ENCODE measurements at regions of chr17 and their contacts with region 1.

Region 1: DNA sequence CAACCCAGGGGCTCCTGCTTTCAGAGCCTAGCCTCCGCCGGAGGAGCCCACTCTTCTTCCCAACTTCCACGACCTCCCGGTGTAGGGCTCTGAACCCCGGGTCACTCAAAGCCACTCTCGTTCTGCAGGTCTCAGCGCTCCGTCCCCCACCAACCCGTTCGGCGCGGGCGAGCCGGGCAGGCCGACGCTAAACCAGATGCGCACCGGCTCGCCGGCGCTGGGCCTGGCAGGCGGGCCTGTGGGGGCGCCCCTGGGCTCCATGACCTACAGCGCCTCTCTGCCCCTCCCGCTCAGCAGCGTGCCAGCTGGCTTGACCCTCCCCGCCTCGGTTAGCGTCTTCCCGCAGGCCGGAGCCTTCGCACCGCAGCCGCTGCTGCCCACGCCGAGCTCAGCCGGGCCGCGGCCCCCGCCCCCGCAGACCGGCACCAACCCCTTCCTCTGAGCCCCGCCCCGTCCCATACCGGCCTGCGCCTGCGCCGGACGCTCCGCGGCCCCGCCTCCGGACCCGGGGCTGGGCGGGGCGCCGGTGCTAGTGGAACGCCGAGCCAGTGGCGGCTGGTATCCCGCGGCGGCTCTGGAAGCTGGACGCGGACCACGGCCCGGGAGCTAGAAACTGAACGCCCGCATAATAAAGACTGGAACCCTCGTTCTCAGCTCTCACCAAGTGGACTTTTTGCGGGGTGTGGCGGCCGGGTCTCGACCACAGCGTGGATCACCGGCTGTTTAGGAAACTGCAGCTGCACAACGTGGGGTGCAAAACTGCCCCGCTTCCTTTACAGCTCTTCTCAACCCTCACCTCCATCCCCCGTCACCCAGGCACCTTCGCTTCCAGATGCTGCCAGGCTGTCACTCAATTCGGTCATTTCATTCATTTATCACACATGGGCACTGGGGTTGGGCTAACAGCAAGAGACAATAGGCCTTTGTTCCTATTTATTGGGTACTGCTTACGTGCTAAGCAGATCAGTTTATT is 5.0 kb upstream of the SPATA20 start:
- DNase-seq: peak; percentile 85
- ATAC-seq: peak; percentile 91
- H3K4me3 Mint-ChIP-seq: peak overlapping the region; percentile 71
- H3K27ac Mint-ChIP-seq: peak overlapping the region; percentile 52
- H3K4me1 Mint-ChIP-seq: peaks cover 12% of the 10 kb centered on the region
- H3K27me3 Mint-ChIP-seq: peaks cover 9% of the 10 kb centered on the region

Region 2: GRCh38 chr17:50507871-50508572 is 34.0 kb before region 1 on chr17 and contains the start of gene MYCBPAP:
- CTCF ChIA-PET with region 1: interaction called, 11 read pairs
- DNase-seq: peak; percentile 91
- ATAC-seq: peak; percentile 75
- H3K4me3 Mint-ChIP-seq: peak within 1 kb of the TSS; percentile 87
- H3K27ac Mint-ChIP-seq: peak within 1 kb of the TSS; percentile 85
- H3K4me1 Mint-ChIP-seq: peaks cover 52% of the 10 kb centered on the region
- H3K27me3 Mint-ChIP-seq: peaks cover 6% of the 10 kb centered on the region
- total RNA-seq, gene MYCBPAP: 6.7 to 13.9 TPM

Region 3: GRCh38 chr17:50568659-50569058 is 26.7 kb after region 1 on chr17:
- CTCF ChIA-PET with region 1: no interaction called
- DNase-seq: no peak
- ATAC-seq: no peak
- H3K4me3 Mint-ChIP-seq: no peak overlapping the region
- H3K27ac Mint-ChIP-seq: no peak overlapping the region
- H3K4me1 Mint-ChIP-seq: no peaks in the 10 kb centered on the region
- H3K27me3 Mint-ChIP-seq: peaks cover 45% of the 10 kb centered on the region

Measured in activated CD8-positive, alpha-beta memory T cell treated with anti-CD3 and anti-CD28 coated beads, Interleukin-2, amount 10 ng/mL, durations not matched to agents 7 days and 5 days (primary cell).